ENCODE measurements at regions of chr20 and their contacts with region 1.

Region 1: DNA sequence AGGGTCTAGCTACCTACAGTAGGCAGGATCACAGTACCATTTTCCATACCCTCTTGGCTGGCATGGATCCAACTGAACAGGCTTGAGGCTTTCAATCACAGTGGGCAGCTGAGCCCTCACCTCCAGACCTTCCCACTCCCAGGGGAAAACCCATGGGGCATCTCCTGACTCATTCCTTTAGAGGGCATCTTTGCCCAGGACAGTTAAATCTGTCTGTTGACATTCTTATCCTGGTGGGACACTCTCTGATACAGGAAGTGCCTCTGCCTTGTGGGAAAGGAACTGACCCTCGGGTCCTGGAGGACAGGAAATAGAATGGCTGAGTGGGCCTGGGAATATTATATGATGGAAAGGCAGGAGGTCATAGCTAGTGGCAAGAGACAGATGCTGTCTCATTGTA is 10.2 kb upstream of the EPB41L1 start:
- DNase-seq: no peak
- H3K4me3 ChIP-seq: no peak overlapping the region
- H3K27ac ChIP-seq: no peak overlapping the region
- H3K4me1 ChIP-seq: no peaks in the 10 kb centered on the region
- H3K27me3 ChIP-seq: no peaks in the 10 kb centered on the region
- CTCF ChIP-seq: no peak

Region 2: DNA sequence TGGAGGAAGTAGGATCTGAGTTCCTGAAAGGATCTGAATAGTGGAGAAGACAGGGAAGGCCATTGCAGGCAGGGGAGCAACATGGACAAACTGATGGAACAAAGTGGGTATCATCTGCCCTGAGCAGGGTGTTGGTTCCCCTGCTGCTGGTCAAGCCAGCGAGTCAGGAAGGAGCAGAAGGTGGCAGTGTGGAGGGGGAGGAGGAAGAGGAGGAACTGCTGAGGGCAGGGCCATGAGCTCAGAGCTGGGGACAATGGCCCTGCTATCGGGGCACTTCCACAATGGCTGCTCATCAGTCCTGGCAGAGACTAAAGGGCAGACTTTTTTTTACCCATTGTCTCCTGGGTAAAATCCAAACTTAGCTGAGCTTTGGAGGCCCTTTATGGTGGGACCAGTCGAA is 162.4 kb before region 1 on chr20:
- intact Hi-C with region 1: no loop called
- DNase-seq: no peak
- H3K4me3 ChIP-seq: no peak overlapping the region
- H3K27ac ChIP-seq: no peak overlapping the region
- H3K4me1 ChIP-seq: no peaks in the 10 kb centered on the region
- H3K27me3 ChIP-seq: no peaks in the 10 kb centered on the region
- CTCF ChIP-seq: no peak

Region 3: DNA sequence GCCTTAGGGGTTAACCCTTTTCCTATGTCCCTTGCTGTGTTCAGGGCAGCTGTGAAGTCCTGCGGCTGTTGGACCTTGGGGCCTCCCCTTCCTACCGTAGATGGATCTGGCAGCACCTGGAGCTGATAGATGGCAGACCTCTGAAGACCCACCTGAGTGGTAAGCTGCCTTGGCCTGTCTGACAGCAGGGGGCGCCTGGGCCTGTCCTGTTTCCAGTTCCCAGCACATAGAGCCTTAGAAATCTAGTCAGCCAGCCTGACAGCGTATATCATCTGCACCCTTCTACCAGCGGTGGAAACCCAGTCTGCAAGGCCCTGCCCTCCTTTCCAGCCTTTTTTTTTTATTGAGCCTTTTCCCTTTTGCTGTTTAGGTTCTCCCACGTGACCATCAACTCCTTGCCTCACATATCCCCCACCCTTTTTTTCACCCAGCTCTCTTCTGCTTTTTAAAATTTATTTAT is 149.3 kb before region 1 on chr20:
- intact Hi-C with region 1: loop called (anchors 2 kb)
- DNase-seq: peak; percentile 88
- H3K4me3 ChIP-seq: no peak overlapping the region
- H3K27ac ChIP-seq: no peak overlapping the region
- H3K4me1 ChIP-seq: no peaks in the 10 kb centered on the region
- H3K27me3 ChIP-seq: no peaks in the 10 kb centered on the region
- CTCF ChIP-seq: peak; percentile 93